PC-3 (cell line): ENCODE measurements at regions of chr2 and their contacts with region 1.

Region 1: DNA sequence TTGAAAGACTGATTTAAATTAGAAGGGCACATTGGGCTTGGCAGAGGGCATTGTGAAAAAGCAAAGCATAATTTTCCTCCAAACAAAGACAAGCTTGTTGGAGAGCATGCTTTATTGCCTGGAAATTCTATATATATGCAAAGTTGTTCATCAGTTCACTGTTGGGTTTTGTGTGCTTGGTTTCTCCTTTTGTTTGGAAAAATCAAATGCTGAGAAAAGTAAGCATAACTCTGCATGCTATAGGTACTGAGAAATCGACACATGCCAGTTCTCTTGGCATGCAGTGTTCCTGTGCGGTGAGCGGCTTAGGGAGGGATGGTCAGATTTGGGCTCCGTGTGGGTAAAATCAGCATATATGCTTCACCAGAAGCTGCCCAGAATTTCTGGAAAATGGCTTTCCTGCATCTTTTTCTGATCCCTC is 161.0 kb downstream of the RAPGEF4 start:
- DNase-seq: no peak
- ATAC-seq: no peak
- H3K4me3 ChIP-seq: no peak overlapping the region
- H3K27ac ChIP-seq: no peak overlapping the region
- H3K4me1 ChIP-seq: no peaks in the 10 kb centered on the region
- H3K27me3 ChIP-seq: peaks cover 70% of the 10 kb centered on the region
- CTCF ChIP-seq: no peak

Region 2: GRCh38 chr2:172922306-172922705 is 25.6 kb after region 1 on chr2:
- CTCF ChIA-PET with region 1: no interaction called
- POLR2A ChIA-PET with region 1: interaction called, 40 read pairs
- intact Hi-C with region 1: no loop called
- DNase-seq: no peak
- ATAC-seq: no peak
- H3K4me3 ChIP-seq: no peak overlapping the region
- H3K27ac ChIP-seq: no peak overlapping the region
- H3K4me1 ChIP-seq: peaks cover 10% of the 10 kb centered on the region; the same call in 1 of the 2 replicates
- H3K27me3 ChIP-seq: no peaks in the 10 kb centered on the region
- CTCF ChIP-seq: no peak